ENCODE measurements at regions of chr5 and their contacts with region 1.

Region 1: DNA sequence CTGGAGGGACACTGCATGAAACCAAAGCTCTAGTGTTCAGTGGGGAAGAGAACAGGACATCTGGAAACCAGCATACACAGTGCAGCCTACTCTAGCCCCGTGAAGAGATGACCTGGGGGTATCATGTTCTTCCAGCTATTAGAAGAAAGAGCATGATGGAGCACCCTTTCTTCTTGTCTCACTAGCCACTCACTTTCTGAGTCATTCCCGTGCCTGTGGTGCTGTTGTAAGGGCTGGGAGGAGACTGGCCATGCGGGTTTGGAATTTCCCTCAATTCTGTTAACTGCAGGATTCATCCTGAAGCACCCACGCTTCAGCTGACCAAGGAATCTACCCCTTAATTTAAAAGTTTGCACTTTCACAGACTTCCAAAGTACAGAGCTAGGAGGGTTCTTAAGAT is 137.0 kb downstream of the COL23A1 start:
- DNase-seq: no peak
- H3K4me3 ChIP-seq: no peak overlapping the region
- H3K27ac ChIP-seq: no peak overlapping the region
- H3K4me1 ChIP-seq: no peaks in the 10 kb centered on the region
- H3K27me3 ChIP-seq: no peaks in the 10 kb centered on the region
- CTCF ChIP-seq: no peak
- EP300 ChIP-seq: no peak
- POLR2A ChIP-seq: no peak

Region 2: DNA sequence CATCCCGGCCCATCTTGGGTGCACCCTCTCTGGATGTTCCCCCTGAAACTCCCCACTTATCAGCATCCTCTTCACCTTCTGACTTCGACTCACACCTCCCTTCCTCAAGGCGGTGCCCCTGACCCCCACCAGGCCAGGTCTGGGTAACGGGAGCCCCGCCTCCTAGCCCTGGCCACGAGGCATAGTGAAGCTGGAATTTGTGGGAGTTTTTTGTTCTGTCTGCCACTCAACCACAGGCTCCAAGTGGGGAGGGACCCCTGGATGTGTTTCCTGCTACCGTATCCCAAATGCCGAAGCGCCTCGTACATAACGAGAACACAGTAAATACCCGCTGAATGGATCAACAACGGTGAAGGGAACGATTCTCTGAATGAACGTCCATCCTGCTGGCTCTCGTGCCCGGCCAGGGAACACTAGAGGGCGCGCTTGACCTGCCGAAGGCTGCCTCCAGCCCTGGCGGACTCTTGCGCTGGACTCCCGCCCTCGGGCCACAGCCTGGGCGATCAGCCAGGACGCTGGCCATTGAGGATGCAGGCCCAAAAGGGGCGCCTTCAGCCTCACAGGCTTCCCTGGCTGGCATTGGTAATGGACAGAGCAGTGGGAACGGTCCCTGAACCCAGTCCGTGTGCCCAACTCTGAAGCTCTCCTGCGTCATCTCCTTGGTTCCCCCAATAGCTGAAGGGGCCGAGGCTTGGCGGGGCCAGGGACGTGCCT is 173.3 kb before region 1 on chr5:
- intact Hi-C with region 1: loop called in 1 of 4 experiments (anchors 10 kb)
- DNase-seq: peak; percentile 68 to 94 (median 78)
- H3K4me3 ChIP-seq: no peak overlapping the region
- H3K27ac ChIP-seq: no peak overlapping the region
- H3K4me1 ChIP-seq: no peaks in the 10 kb centered on the region
- H3K27me3 ChIP-seq: no peaks in the 10 kb centered on the region
- CTCF ChIP-seq: peak in 2 of 3 donors; percentile 45 to 68
- EP300 ChIP-seq: no peak
- POLR2A ChIP-seq: no peak

Region 3: GRCh38 chr5:178502401-178503100 is 49.3 kb after region 1 on chr5:
- intact Hi-C with region 1: no loop called
- DNase-seq: no peak
- H3K4me3 ChIP-seq: no peak overlapping the region
- H3K27ac ChIP-seq: no peak overlapping the region
- H3K4me1 ChIP-seq: no peaks in the 10 kb centered on the region
- H3K27me3 ChIP-seq: no peaks in the 10 kb centered on the region
- CTCF ChIP-seq: no peak
- EP300 ChIP-seq: no peak
- POLR2A ChIP-seq: no peak

Region 4: GRCh38 chr5:179123491-179124272 is 670.5 kb after region 1 on chr5:
- intact Hi-C with region 1: no loop called
- DNase-seq: no peak
- H3K4me3 ChIP-seq: no peak overlapping the region
- H3K27ac ChIP-seq: no peak overlapping the region
- H3K4me1 ChIP-seq: no peaks in the 10 kb centered on the region
- H3K27me3 ChIP-seq: no peaks in the 10 kb centered on the region
- CTCF ChIP-seq: no peak
- EP300 ChIP-seq: no peak
- POLR2A ChIP-seq: no peak

Measured in ovary (tissue), 10 donors.